ENCODE measurements at regions of chr14 and their contacts with region 1.

Region 1: GRCh38 chr14:55094321-55095157 is 34.5 kb upstream of the LGALS3 start:
- DNase-seq: no peak

Region 2: GRCh38 chr14:55160989-55161388 is 66.5 kb after region 1 on chr14:
- intact Hi-C with region 1: loop called (anchors 1 kb)
- DNase-seq: no peak